H1 (cell line): ENCODE measurements at regions of chr19 and their contacts with region 1.

Region 1: GRCh38 chr19:12722566-12723380 is 959 bp downstream of the TNPO2 start:
- DNase-seq: peak; percentile 91
- H3K4me3 ChIP-seq: peak overlapping the region; percentile 80 to 93 (median 82)
- H3K27ac ChIP-seq: peak overlapping the region; percentile 87
- H3K4me1 ChIP-seq: peaks cover 0 to 6% (median 2%) of the 10 kb centered on the region in 4 experiments; a peak in 5 of 7 replicates
- H3K27me3 ChIP-seq: no peaks in the 10 kb centered on the region
- CTCF ChIP-seq: no peak
- EP300 ChIP-seq: no peak
- POLR2A ChIP-seq: peak; percentile 55 to 89
- RAD21 ChIP-seq: no peak

Region 2: GRCh38 chr19:12647490-12648071 is 75.2 kb before region 1 on chr19:
- CTCF ChIA-PET with region 1: no interaction called
- POLR2A ChIA-PET with region 1: no interaction called
- DNase-seq: peak; percentile 80 to 86
- H3K4me3 ChIP-seq: peak overlapping the region in 1 of 4 experiments; percentile 40; a peak in 2 of 8 replicates
- H3K27ac ChIP-seq: no peak overlapping the region
- H3K4me1 ChIP-seq: no peaks in the 10 kb centered on the region
- H3K27me3 ChIP-seq: no peaks in the 10 kb centered on the region
- CTCF ChIP-seq: peak in 1 of 3 experiments; percentile 20; a peak in 1 of 4 replicates
- EP300 ChIP-seq: no peak
- POLR2A ChIP-seq: no peak
- RAD21 ChIP-seq: 0 out of 4 replicates have a peak, but pooled peaks of 1 of the 2 experiments have one; percentile 2

Region 3: DNA sequence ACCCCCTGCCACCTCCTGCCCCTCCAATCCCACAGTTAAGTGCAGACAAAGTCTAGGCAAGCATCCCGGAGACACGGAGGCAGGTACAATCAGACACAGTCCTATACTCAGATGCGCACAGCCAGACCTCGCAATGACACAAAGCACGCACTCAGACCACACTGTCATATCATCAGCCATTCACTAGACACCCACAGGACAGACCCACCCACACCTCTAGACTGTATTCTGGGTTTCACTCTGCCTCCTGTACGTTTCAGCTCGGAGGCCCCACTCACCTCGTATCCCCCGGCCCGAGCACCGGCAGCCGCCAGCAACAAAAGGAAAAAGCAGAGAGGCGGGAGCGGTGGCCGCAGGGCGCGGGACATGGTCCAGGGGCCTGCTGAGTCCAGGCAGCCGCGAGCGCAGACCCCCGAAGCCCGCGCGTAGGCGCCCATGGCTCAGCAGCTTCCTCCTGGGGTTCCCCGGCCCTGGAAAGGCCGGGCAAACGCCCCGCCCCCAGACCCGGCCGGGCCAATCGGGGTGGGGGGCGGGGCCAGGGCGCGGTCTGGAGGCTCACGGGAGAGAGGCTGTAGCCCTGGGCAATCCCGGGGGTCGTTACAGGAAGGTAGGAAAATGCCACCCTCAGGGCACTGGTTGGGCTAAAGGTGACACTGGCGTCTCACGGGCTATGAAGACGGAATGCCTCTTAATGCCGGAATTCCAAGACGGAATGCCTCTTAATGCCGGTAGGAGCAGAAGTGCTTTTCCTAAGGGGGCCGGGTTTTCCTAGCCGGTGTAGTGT is 56.3 kb before region 1 on chr19 and contains the starts of genes MAN2B1 and WDR83:
- CTCF ChIA-PET with region 1: no interaction called
- POLR2A ChIA-PET with region 1: interaction called, 23 read pairs
- DNase-seq: peak in 1 of 2 experiments; percentile 85
- H3K4me3 ChIP-seq: peak within 1 kb of the TSS; percentile 88 to 97 (median 92)
- H3K27ac ChIP-seq: peak within 1 kb of the TSS; percentile 41; the same call in 1 of the 2 replicates
- H3K4me1 ChIP-seq: peaks cover 3 to 22% (median 7%) of the 10 kb centered on the region in 4 experiments
- H3K27me3 ChIP-seq: no peaks in the 10 kb centered on the region; a peak in 1 of 7 replicates
- CTCF ChIP-seq: no peak
- EP300 ChIP-seq: no peak
- POLR2A ChIP-seq: peak in 1 of 2 experiments; percentile 67; a peak in 2 of 3 replicates
- RAD21 ChIP-seq: no peak
- total RNA-seq, gene MAN2B1: 71.1 and 76.3 TPM in 2 replicates
- total RNA-seq, gene WDR83: 15.3 and 19.6 TPM in 2 replicates

Region 4: DNA sequence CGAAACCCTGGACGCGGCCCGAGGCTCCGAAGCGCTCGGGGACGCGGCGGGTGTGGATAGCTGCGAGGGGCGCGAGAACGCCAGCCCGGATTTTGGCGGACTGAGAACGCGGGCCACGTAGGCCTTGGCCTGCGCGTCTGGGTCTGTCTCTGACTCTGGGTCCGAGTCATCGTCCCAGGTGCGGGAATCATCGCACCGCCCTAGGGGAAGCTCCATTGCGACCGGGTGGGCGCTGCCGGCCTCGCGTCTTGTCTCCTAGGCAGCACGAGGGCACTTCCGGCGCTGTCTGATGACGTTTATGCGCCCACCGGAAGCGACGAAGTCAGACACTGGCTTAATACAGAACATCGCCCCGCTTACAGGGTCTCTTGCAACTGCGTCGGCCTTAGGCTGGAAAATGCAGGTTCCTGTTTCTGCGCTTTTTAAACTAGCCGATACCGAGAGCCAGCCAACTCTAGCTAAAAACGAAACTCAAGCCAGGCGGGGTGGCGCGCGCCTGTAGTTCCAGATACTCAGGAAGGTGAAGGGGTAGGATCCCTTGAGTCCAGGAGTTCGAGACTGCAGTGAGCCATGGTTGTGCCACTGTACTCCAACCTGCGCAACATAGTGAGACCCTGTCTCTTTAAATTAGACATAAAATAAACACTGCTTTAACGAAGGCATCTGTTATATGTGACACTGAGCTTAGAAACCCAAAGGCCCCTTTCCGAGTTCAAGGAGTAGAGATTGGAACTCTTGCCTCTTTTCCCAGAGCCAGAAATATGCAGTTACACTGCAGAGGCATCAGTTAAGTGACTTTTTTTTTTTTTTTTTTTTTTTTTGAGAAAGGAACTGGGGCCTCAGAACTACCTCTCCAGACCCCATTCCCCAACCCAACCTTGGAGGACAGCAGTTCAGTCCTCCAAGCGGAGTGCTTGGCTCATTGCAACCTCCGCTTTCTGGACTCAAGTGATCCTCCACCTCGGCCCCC is 26.1 kb before region 1 on chr19 and contains the start of gene FBXW9:
- CTCF ChIA-PET with region 1: no interaction called
- POLR2A ChIA-PET with region 1: interaction called, 35 read pairs
- DNase-seq: peak; percentile 88 to 99
- H3K4me3 ChIP-seq: peak within 1 kb of the TSS; percentile 68 to 87 (median 82)
- H3K27ac ChIP-seq: peak within 1 kb of the TSS; percentile 83
- H3K4me1 ChIP-seq: peaks cover 0 to 4% (median 3%) of the 10 kb centered on the region in 4 experiments; a peak in 2 of 7 replicates
- H3K27me3 ChIP-seq: no peaks in the 10 kb centered on the region
- CTCF ChIP-seq: no peak
- EP300 ChIP-seq: no peak
- POLR2A ChIP-seq: peak; percentile 87 to 93
- RAD21 ChIP-seq: no peak
- total RNA-seq, gene FBXW9: 10.8 and 11.1 TPM in 2 replicates

Region 5: DNA sequence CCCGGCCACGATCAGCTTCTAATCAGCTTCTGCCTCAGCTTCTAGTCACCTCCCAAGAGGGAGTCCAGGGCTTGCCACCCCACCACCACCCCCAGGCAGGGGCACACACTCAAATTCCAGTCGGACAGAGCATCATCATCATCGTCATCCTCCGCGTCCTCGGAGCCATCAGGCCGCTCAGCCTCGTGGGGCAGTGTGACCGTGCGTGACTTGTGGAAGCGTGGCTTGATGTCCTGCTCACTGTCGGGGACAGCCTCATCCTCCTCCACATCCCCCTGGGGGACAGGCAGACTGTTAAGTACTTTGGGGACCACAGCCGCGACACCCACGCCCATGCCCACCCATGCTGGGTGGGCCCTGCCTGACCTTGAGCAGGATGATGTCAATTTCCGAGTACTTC is 11.6 kb before region 1 on chr19:
- CTCF ChIA-PET with region 1: interaction called, 5 read pairs
- POLR2A ChIA-PET with region 1: interaction called, 50 read pairs
- DNase-seq: no peak
- H3K4me3 ChIP-seq: no peak overlapping the region
- H3K27ac ChIP-seq: no peak overlapping the region
- H3K4me1 ChIP-seq: no peaks in the 10 kb centered on the region
- H3K27me3 ChIP-seq: no peaks in the 10 kb centered on the region
- CTCF ChIP-seq: no peak
- EP300 ChIP-seq: no peak
- POLR2A ChIP-seq: no peak
- RAD21 ChIP-seq: no peak

Region 6: DNA sequence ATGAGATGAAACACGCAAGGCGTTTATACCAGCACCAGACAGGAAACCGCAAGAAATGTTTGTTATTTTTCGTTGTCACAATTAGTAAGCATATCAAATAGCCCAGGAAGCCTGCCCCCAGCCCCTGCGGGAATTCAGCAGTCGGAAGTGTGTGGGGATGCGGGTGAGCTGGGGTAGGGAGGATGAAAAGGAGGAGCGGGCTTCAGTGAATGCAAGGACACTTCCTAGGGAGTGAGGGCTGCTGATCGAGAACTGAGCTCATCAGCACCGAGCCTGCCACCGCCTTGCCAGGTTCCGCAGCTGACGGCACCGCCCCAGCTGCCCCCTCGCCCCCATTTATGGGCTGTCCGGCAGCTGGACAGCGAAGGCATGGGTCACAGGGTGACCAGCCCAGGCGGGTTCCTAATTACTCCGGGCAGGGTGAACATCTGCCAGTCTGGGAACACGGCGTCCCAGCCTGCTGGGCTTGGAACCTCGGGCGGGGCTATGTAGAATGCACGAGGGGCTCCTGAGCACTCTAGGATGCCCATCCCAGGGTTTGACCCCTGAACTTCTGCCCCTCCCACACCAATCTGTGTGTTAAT is 27.3 kb after region 1 on chr19:
- CTCF ChIA-PET with region 1: interaction called, 5 read pairs
- POLR2A ChIA-PET with region 1: interaction called, 50 read pairs
- DNase-seq: no peak
- H3K4me3 ChIP-seq: no peak overlapping the region
- H3K27ac ChIP-seq: no peak overlapping the region
- H3K4me1 ChIP-seq: peaks cover 0 to 10% (median 4%) of the 10 kb centered on the region in 4 experiments; a peak in 4 of 7 replicates
- H3K27me3 ChIP-seq: no peaks in the 10 kb centered on the region; a peak in 3 of 7 replicates
- CTCF ChIP-seq: no peak
- EP300 ChIP-seq: no peak
- POLR2A ChIP-seq: no peak
- RAD21 ChIP-seq: no peak

Region 7: GRCh38 chr19:12777217-12778016 is 54.6 kb after region 1 on chr19:
- CTCF ChIA-PET with region 1: interaction called, 4 read pairs
- POLR2A ChIA-PET with region 1: interaction called, 10 read pairs
- DNase-seq: peak in 1 of 2 experiments; percentile 95
- H3K4me3 ChIP-seq: peak overlapping the region; percentile 40 to 69 (median 62)
- H3K27ac ChIP-seq: no peak overlapping the region
- H3K4me1 ChIP-seq: peaks cover 0 to 22% (median 17%) of the 10 kb centered on the region in 4 experiments; a peak in 6 of 7 replicates
- H3K27me3 ChIP-seq: no peaks in the 10 kb centered on the region
- CTCF ChIP-seq: peak; percentile 81 to 92 (median 81)
- EP300 ChIP-seq: peak in 1 of 2 experiments; percentile 41; a peak in 1 of 3 replicates
- POLR2A ChIP-seq: no peak
- RAD21 ChIP-seq: peak; percentile 74 to 84